CD4-positive, alpha-beta memory T cell (primary cell): ENCODE measurements at regions of chr12 and their contacts with region 1.

Region 1: GRCh38 chr12:103441437-103442181 is 54.2 kb downstream of the C12orf42 start:
- DNase-seq: peak in 4 of 5 donors; percentile 49 to 64 (median 58)
- H3K4me3 ChIP-seq: peak overlapping the region in 1 of 2 donors; percentile 42
- H3K4me3 Mint-ChIP-seq: peak overlapping the region; percentile 84 to 96 (median 90)
- H3K27ac ChIP-seq: peak overlapping the region; percentile 17
- H3K27ac Mint-ChIP-seq: peak overlapping the region; percentile 80 to 99 (median 97)
- H3K4me1 ChIP-seq: peaks cover 30% of the 10 kb centered on the region
- H3K4me1 Mint-ChIP-seq: peaks cover 7 to 21% (median 18%) of the 10 kb centered on the region in 4 donors
- H3K27me3 ChIP-seq: no peaks in the 10 kb centered on the region
- H3K27me3 Mint-ChIP-seq: no peaks in the 10 kb centered on the region

Region 2: GRCh38 chr12:103455020-103455763 is 13.6 kb after region 1 on chr12:
- CTCF ChIA-PET with region 1: no interaction called
- POLR2A ChIA-PET with region 1: interaction called, 5 read pairs
- intact Hi-C with region 1: loop called (anchors 2 kb)
- DNase-seq: peak in 4 of 5 donors; percentile 45 to 62 (median 48)
- H3K4me3 ChIP-seq: no peak overlapping the region
- H3K4me3 Mint-ChIP-seq: peak overlapping the region in 4 of 8 donors; percentile 12 to 44 (median 20)
- H3K27ac ChIP-seq: no peak overlapping the region
- H3K27ac Mint-ChIP-seq: peak overlapping the region in 6 of 7 donors; percentile 23 to 85 (median 38)
- H3K4me1 ChIP-seq: peaks cover 30% of the 10 kb centered on the region
- H3K4me1 Mint-ChIP-seq: peaks cover 13 to 25% (median 18%) of the 10 kb centered on the region in 4 donors
- H3K27me3 ChIP-seq: no peaks in the 10 kb centered on the region
- H3K27me3 Mint-ChIP-seq: no peaks in the 10 kb centered on the region

Region 3: GRCh38 chr12:103495479-103496456 is 54.2 kb after region 1 on chr12 and contains the start of gene C12orf42:
- CTCF ChIA-PET with region 1: interaction called, 4 read pairs
- POLR2A ChIA-PET with region 1: interaction called, 8 read pairs
- intact Hi-C with region 1: loop called (anchors 2 kb)
- DNase-seq: peak; percentile 44 to 59 (median 53)
- H3K4me3 ChIP-seq: peak within 1 kb of the TSS; percentile 31 to 51
- H3K4me3 Mint-ChIP-seq: peak within 1 kb of the TSS; percentile 77 to 93 (median 82)
- H3K27ac ChIP-seq: peak within 1 kb of the TSS; percentile 31
- H3K27ac Mint-ChIP-seq: peak within 1 kb of the TSS; percentile 22 to 86 (median 71)
- H3K4me1 ChIP-seq: peaks cover 9% of the 10 kb centered on the region
- H3K4me1 Mint-ChIP-seq: peaks cover 12 to 16% (median 15%) of the 10 kb centered on the region in 4 donors
- H3K27me3 ChIP-seq: peaks cover 4% of the 10 kb centered on the region
- H3K27me3 Mint-ChIP-seq: peaks cover 10 to 12% of the 10 kb centered on the region in 2 donors
- total RNA-seq, gene C12orf42: 8.4 to 12.8 TPM